Naive thymus-derived CD4-positive, alpha-beta T cell (primary cell): ENCODE measurements at regions of chr2 and their contacts with region 1.

Region 1: DNA sequence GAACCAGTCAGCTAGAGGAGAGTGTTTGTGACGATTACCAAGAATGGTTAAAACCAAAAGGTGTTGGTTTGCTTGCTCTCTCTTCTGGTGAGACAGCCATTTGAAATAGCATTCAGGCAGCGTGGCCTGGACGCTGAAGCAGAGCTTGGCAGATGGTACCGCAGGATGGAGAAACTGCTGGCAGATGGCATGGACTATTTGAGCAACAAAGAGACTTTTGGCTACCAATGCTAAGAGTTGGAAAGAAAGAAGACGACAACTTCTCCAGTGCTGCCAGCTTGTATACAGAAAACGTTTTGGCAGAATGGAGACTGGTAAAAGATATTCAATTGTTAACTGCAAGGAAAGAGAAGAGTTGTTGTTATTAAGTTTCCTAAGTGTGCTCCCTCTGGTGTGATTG is 315.0 kb downstream of the PARD3B start:
- DNase-seq: no peak
- ATAC-seq: no peak
- H3K4me3 ChIP-seq: no peak overlapping the region
- H3K4me3 Mint-ChIP-seq: no peak overlapping the region
- H3K27ac ChIP-seq: no peak overlapping the region
- H3K27ac Mint-ChIP-seq: no peak overlapping the region
- H3K4me1 ChIP-seq: no peaks in the 10 kb centered on the region
- H3K4me1 Mint-ChIP-seq: no peaks in the 10 kb centered on the region
- H3K27me3 ChIP-seq: no peaks in the 10 kb centered on the region
- H3K27me3 Mint-ChIP-seq: peaks cover 0 to 57% (median 4%) of the 10 kb centered on the region in 5 donors

Region 2: GRCh38 chr2:204407204-204408070 is 452.8 kb before region 1 on chr2:
- CTCF ChIA-PET with region 1: no interaction called
- POLR2A ChIA-PET with region 1: no interaction called
- intact Hi-C with region 1: no loop called
- DNase-seq: no peak
- ATAC-seq: no peak
- H3K4me3 ChIP-seq: no peak overlapping the region
- H3K4me3 Mint-ChIP-seq: no peak overlapping the region
- H3K27ac ChIP-seq: no peak overlapping the region
- H3K27ac Mint-ChIP-seq: no peak overlapping the region
- H3K4me1 ChIP-seq: no peaks in the 10 kb centered on the region
- H3K4me1 Mint-ChIP-seq: no peaks in the 10 kb centered on the region
- H3K27me3 ChIP-seq: no peaks in the 10 kb centered on the region
- H3K27me3 Mint-ChIP-seq: peaks cover 5 to 36% (median 7%) of the 10 kb centered on the region in 5 donors

Region 3: GRCh38 chr2:204795156-204795555 is 65.1 kb before region 1 on chr2:
- CTCF ChIA-PET with region 1: no interaction called
- POLR2A ChIA-PET with region 1: no interaction called
- intact Hi-C with region 1: no loop called
- DNase-seq: no peak
- ATAC-seq: no peak
- H3K4me3 ChIP-seq: no peak overlapping the region
- H3K4me3 Mint-ChIP-seq: no peak overlapping the region
- H3K27ac ChIP-seq: no peak overlapping the region
- H3K27ac Mint-ChIP-seq: no peak overlapping the region
- H3K4me1 ChIP-seq: no peaks in the 10 kb centered on the region
- H3K4me1 Mint-ChIP-seq: no peaks in the 10 kb centered on the region
- H3K27me3 ChIP-seq: no peaks in the 10 kb centered on the region
- H3K27me3 Mint-ChIP-seq: peaks cover 0 to 31% (median 0%) of the 10 kb centered on the region in 5 donors

Region 4: DNA sequence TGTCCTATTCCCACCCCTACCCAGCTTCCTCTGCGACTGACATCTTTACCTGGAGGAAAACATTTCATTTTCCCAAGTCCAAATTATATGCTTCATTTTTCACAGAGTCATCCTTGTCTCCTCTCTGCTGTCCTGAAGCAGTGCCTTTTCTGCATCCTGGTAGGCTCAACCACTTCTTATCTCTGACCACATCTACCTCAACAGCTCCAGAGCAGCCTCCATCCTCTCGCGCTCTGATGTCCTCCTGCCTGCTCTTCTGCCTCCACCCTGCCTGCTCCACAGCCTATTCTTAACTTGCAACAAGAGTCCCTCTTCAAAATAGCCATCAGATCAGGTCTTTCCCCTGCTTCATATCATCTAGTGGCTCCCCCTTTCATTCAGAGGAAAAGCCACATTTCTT is 142.1 kb after region 1 on chr2:
- CTCF ChIA-PET with region 1: interaction called, 10 read pairs
- POLR2A ChIA-PET with region 1: no interaction called
- intact Hi-C with region 1: no loop called
- DNase-seq: peak in 4 of 9 donors; percentile 6 to 38 (median 20)
- ATAC-seq: no peak
- H3K4me3 ChIP-seq: no peak overlapping the region
- H3K4me3 Mint-ChIP-seq: peak overlapping the region; percentile 10 to 75 (median 32)
- H3K27ac ChIP-seq: no peak overlapping the region
- H3K27ac Mint-ChIP-seq: peak overlapping the region in 5 of 9 donors; percentile 1 to 74 (median 34)
- H3K4me1 ChIP-seq: peaks cover 0 to 14% of the 10 kb centered on the region in 2 donors
- H3K4me1 Mint-ChIP-seq: peaks cover 18 to 43% (median 36%) of the 10 kb centered on the region in 7 donors
- H3K27me3 ChIP-seq: no peaks in the 10 kb centered on the region
- H3K27me3 Mint-ChIP-seq: no peaks in the 10 kb centered on the region

Region 5: DNA sequence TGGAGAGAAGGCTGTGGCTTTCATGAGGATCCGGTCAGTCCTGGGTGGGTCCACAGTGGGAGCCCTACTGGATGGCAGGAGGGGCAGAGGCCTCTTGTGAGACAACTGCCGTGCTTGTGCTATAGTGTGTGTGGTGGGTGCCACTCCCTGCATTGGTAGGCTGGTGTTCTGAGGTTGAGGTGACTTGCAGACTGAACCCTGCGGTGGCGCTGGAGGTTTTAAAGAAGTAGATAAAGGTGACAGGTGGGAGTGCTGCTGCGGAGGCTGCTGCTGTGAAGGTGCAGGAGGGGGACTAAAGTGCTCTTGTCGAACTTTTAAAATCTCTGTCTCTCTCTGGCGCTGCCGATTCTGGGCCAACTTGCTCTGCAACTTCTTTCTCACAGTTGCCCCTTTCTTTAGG is 1196.0 kb after region 1 on chr2:
- CTCF ChIA-PET with region 1: no interaction called
- POLR2A ChIA-PET with region 1: no interaction called
- intact Hi-C with region 1: no loop called
- DNase-seq: no peak
- ATAC-seq: no peak
- H3K4me3 ChIP-seq: no peak overlapping the region
- H3K4me3 Mint-ChIP-seq: peak overlapping the region in 1 of 10 donors; percentile 7
- H3K27ac ChIP-seq: no peak overlapping the region
- H3K27ac Mint-ChIP-seq: peak overlapping the region in 5 of 9 donors; percentile 18 to 83 (median 59)
- H3K4me1 ChIP-seq: peaks cover 0 to 4% of the 10 kb centered on the region in 2 donors
- H3K4me1 Mint-ChIP-seq: peaks cover 4 to 28% (median 22%) of the 10 kb centered on the region in 7 donors
- H3K27me3 ChIP-seq: no peaks in the 10 kb centered on the region
- H3K27me3 Mint-ChIP-seq: no peaks in the 10 kb centered on the region